Activated CD8-positive, alpha-beta T cell treated with anti-CD3 and anti-CD28 coated beads, Interleukin-2, amount 10 ng/mL, durations not matched to agents 7 days and 5 days (primary cell): ENCODE measurements at regions of chr3 and their contacts with region 1.

Region 1: GRCh38 chr3:16516695-16517481 is 3.4 kb upstream of the RFTN1 start:
- DNase-seq: peak; percentile 58
- ATAC-seq: no peak
- H3K4me3 Mint-ChIP-seq: peak overlapping the region; percentile 54
- H3K27ac Mint-ChIP-seq: peak overlapping the region; percentile 86
- H3K4me1 Mint-ChIP-seq: peaks cover 64% of the 10 kb centered on the region
- H3K27me3 Mint-ChIP-seq: no peaks in the 10 kb centered on the region

Region 2: GRCh38 chr3:16482770-16483531 is 33.9 kb before region 1 on chr3:
- CTCF ChIA-PET with region 1: interaction called, 18 read pairs
- POLR2A ChIA-PET with region 1: interaction called, 23 read pairs
- DNase-seq: peak; percentile 71
- ATAC-seq: peak; percentile 89
- H3K4me3 Mint-ChIP-seq: peak overlapping the region; percentile 40
- H3K27ac Mint-ChIP-seq: peak overlapping the region; percentile 83
- H3K4me1 Mint-ChIP-seq: peaks cover 73% of the 10 kb centered on the region
- H3K27me3 Mint-ChIP-seq: no peaks in the 10 kb centered on the region

Region 3: GRCh38 chr3:16529264-16529663 is 12.4 kb after region 1 on chr3:
- CTCF ChIA-PET with region 1: interaction called, 12 read pairs
- POLR2A ChIA-PET with region 1: interaction called, 4 read pairs
- DNase-seq: no peak
- ATAC-seq: no peak
- H3K4me3 Mint-ChIP-seq: no peak overlapping the region
- H3K27ac Mint-ChIP-seq: no peak overlapping the region
- H3K4me1 Mint-ChIP-seq: peaks cover 17% of the 10 kb centered on the region
- H3K27me3 Mint-ChIP-seq: peaks cover 10% of the 10 kb centered on the region